Calu3 (cell line): ENCODE measurements at regions of chr5 and their contacts with region 1.

Region 1: GRCh38 chr5:72138943-72139521 is 31.8 kb downstream of the MAP1B start:
- DNase-seq: no peak
- H3K4me3 Mint-ChIP-seq: no peak overlapping the region
- H3K27ac Mint-ChIP-seq: no peak overlapping the region
- H3K4me1 Mint-ChIP-seq: peaks cover 5% of the 10 kb centered on the region
- H3K27me3 Mint-ChIP-seq: no peaks in the 10 kb centered on the region
- CTCF ChIP-seq: no peak

Region 2: GRCh38 chr5:72194846-72195245 is 55.8 kb after region 1 on chr5:
- CTCF ChIA-PET with region 1: no interaction called
- intact Hi-C with region 1: no loop called
- DNase-seq: no peak
- H3K4me3 Mint-ChIP-seq: no peak overlapping the region
- H3K27ac Mint-ChIP-seq: no peak overlapping the region
- H3K4me1 Mint-ChIP-seq: no peaks in the 10 kb centered on the region
- H3K27me3 Mint-ChIP-seq: no peaks in the 10 kb centered on the region
- CTCF ChIP-seq: no peak

Region 3: DNA sequence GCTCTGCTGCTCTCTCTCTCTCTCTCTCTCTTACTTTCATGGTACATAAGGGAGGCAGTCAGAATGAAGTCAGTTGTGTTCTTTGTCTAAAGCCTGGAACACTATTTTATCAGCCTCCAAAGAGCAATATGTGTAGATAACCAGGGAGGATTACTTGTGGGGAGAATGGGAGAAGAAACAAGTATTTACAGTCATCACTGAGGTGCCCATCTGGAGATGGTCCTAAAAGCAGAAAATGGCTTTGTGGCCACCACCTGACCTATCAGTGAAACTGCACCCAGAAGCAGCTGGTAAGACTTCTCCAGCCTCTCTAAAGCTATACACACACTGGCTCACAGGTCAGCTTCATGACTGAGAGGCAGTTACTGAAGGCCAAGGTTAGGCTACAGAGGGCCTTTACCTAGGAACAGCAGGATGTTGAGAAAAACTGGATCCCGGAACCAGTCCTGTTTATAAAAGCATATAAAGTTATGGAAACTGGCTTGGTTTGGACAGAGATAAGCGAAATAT is 105.9 kb after region 1 on chr5:
- CTCF ChIA-PET with region 1: no interaction called
- intact Hi-C with region 1: loop called (anchors 5 kb)
- DNase-seq: peak; percentile 26
- H3K4me3 Mint-ChIP-seq: no peak overlapping the region
- H3K27ac Mint-ChIP-seq: no peak overlapping the region
- H3K4me1 Mint-ChIP-seq: peaks cover 25% of the 10 kb centered on the region
- H3K27me3 Mint-ChIP-seq: no peaks in the 10 kb centered on the region
- CTCF ChIP-seq: peak; percentile 36

Region 4: GRCh38 chr5:72268753-72269410 is 129.8 kb after region 1 on chr5:
- CTCF ChIA-PET with region 1: no interaction called
- intact Hi-C with region 1: loop called (anchors 2 kb)
- DNase-seq: peak; percentile 71
- H3K4me3 Mint-ChIP-seq: no peak overlapping the region
- H3K27ac Mint-ChIP-seq: no peak overlapping the region
- H3K4me1 Mint-ChIP-seq: peaks cover 8% of the 10 kb centered on the region
- H3K27me3 Mint-ChIP-seq: no peaks in the 10 kb centered on the region
- CTCF ChIP-seq: peak; percentile 55

Region 5: DNA sequence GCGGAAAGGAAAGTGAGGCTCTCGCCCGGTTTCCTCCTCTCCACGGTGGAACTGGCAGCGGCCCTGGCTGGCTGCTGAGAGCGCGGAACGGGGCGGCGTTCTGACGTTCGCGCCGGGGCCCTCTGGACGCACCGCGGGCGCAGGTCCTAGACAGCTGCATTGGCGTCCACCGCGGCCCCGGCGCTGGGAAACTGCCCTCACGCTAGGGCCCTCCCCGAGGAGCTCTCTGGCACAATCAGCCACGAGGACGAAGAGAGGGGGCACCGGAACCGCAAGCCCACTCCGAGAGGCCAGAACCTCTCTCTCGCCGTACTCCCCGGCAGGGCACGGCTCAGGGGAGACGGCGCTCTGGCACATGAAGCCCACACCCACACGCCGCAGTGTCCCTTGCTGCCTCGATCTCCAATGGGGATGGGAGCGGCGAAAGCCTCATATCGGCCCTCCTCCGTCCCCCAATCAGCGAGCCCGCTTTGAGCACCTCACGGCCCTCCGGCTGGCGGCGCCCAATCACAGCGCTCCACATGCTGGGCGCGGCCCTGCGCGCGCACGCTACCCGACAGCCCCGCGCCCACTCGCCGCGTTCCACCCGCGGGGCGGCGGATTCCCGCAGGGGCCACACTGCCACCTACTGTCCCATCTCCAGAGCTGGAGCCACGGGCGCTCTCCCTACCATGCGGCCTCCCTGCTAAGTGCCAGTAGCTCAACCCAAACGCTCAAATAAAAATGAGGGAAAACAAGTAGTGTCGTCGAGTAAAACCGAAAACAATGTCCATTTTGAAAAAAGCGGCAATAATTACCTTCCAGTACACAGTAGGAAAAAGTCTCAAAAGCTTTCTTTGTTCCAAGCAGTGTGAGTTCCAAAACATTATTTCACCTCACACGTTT is 169.2 kb after region 1 on chr5:
- CTCF ChIA-PET with region 1: no interaction called
- intact Hi-C with region 1: loop called (anchors 10 kb)
- DNase-seq: peak; percentile 96
- H3K4me3 Mint-ChIP-seq: peak overlapping the region; percentile 79
- H3K27ac Mint-ChIP-seq: peak overlapping the region; percentile 98
- H3K4me1 Mint-ChIP-seq: peaks cover 16% of the 10 kb centered on the region
- H3K27me3 Mint-ChIP-seq: no peaks in the 10 kb centered on the region
- CTCF ChIP-seq: peak; percentile 77